GM12878 (cell line): ENCODE measurements at regions of chr1 and their contacts with region 1.

Region 1: GRCh38 chr1:42096554-42096953 is 56.7 kb upstream of the GUCA2B start:
- DNase-seq: no peak
- ATAC-seq: peak; percentile 31; the same call in 1 of the 3 replicates
- H3K4me3 ChIP-seq: no peak overlapping the region
- H3K27ac ChIP-seq: no peak overlapping the region
- H3K4me1 ChIP-seq: no peaks in the 10 kb centered on the region; the same call in 1 of the 2 replicates
- H3K27me3 ChIP-seq: no peaks in the 10 kb centered on the region
- CTCF ChIP-seq: no peak
- EP300 ChIP-seq: no peak
- POLR2A ChIP-seq: no peak
- RAD21 ChIP-seq: no peak

Region 2: GRCh38 chr1:42002220-42002619 is 94.3 kb before region 1 on chr1:
- CTCF ChIA-PET with region 1: no interaction called
- POLR2A ChIA-PET with region 1: no interaction called
- RAD21 ChIA-PET with region 1: no interaction called
- SMC1A ChIA-PET with region 1: no interaction called
- in situ Hi-C with region 1: no loop called
- intact Hi-C with region 1: no loop called
- DNase-seq: no peak
- ATAC-seq: no peak; the same call in 1 of the 3 replicates
- H3K4me3 ChIP-seq: no peak overlapping the region
- H3K27ac ChIP-seq: no peak overlapping the region
- H3K4me1 ChIP-seq: peaks cover 32% of the 10 kb centered on the region
- H3K27me3 ChIP-seq: no peaks in the 10 kb centered on the region
- CTCF ChIP-seq: no peak
- EP300 ChIP-seq: no peak
- POLR2A ChIP-seq: no peak
- RAD21 ChIP-seq: no peak

Region 3: GRCh38 chr1:42043182-42043581 is 53.4 kb before region 1 on chr1:
- CTCF ChIA-PET with region 1: no interaction called
- POLR2A ChIA-PET with region 1: no interaction called
- RAD21 ChIA-PET with region 1: no interaction called
- SMC1A ChIA-PET with region 1: no interaction called
- in situ Hi-C with region 1: no loop called
- intact Hi-C with region 1: loop called (anchors 2 kb)
- DNase-seq: no peak
- ATAC-seq: no peak
- H3K4me3 ChIP-seq: no peak overlapping the region
- H3K27ac ChIP-seq: no peak overlapping the region
- H3K4me1 ChIP-seq: no peaks in the 10 kb centered on the region
- H3K27me3 ChIP-seq: peaks cover 0 to 1% of the 10 kb centered on the region in 2 experiments; a peak in 1 of 4 replicates
- CTCF ChIP-seq: no peak
- EP300 ChIP-seq: no peak
- POLR2A ChIP-seq: no peak
- RAD21 ChIP-seq: no peak